AG04450 (cell line): ENCODE measurements at regions of chr7 and their contacts with region 1.

Region 1: DNA sequence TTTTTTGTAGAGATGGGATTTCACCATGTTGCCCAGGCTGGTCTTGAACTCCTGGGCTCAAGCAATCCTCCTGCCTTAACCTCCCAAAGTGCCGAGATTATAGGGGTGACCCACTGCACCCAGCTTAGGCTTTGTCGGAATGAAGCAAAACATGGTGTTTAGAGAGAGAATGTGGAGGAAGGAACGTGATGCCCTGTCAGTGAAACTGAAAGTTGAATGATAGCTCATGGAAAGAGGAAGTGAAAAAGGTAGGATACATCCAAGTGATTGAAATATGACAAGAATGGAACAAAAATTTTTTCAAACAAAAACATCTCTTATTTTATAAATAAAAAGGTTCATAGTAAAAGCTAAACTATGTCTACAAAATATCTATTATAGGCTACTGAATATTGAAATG is 5.9 kb downstream of the AKAP9 start:
- DNase-seq: no peak
- H3K4me3 ChIP-seq: no peak overlapping the region
- H3K27ac ChIP-seq: no peak overlapping the region
- H3K27me3 ChIP-seq: no peaks in the 10 kb centered on the region
- CTCF ChIP-seq: no peak

Region 2: DNA sequence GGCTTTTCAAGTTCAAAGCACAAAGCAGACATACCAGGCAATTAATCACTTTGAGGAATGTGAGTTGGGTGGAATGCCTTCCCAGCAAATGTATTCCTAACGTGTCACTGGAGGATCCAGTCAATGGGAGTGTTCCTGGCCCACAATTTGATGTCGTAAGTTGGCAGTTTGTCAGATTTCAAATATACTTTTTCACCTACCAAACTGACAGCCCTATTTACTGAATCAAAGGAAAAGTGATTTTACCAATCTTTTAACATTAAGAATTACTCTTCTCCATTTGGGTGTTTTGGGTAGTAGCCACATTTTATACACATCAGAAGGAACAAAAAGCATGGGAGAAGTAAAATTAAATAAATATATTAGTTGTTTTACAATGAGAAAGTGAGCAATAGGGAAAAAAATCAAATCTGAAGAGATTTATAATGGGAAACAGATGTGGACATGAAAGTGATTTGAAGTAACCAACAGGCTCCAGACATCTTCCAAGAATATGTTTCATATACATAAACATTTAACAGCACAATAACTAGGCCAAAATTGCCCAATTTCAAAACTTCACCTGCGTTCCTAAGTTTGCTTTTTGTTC is 289.0 kb before region 1 on chr7:
- CTCF ChIA-PET with region 1: no interaction called
- POLR2A ChIA-PET with region 1: no interaction called
- DNase-seq: no peak
- H3K4me3 ChIP-seq: no peak overlapping the region
- H3K27ac ChIP-seq: no peak overlapping the region
- H3K27me3 ChIP-seq: no peaks in the 10 kb centered on the region
- CTCF ChIP-seq: no peak

Region 3: GRCh38 chr7:91784463-91784862 is 162.1 kb before region 1 on chr7:
- CTCF ChIA-PET with region 1: no interaction called
- POLR2A ChIA-PET with region 1: no interaction called
- DNase-seq: peak; percentile 8
- H3K4me3 ChIP-seq: no peak overlapping the region
- H3K27ac ChIP-seq: no peak overlapping the region
- H3K27me3 ChIP-seq: peaks cover 4% of the 10 kb centered on the region
- CTCF ChIP-seq: peak; percentile 34

Region 4: GRCh38 chr7:91918356-91918755 is 28.2 kb before region 1 on chr7:
- CTCF ChIA-PET with region 1: interaction called, 10 read pairs
- POLR2A ChIA-PET with region 1: no interaction called
- DNase-seq: no peak
- H3K4me3 ChIP-seq: no peak overlapping the region
- H3K27ac ChIP-seq: no peak overlapping the region
- H3K27me3 ChIP-seq: no peaks in the 10 kb centered on the region
- CTCF ChIP-seq: no peak